ENCODE measurements at regions of chr5 and their contacts with region 1.

Region 1: DNA sequence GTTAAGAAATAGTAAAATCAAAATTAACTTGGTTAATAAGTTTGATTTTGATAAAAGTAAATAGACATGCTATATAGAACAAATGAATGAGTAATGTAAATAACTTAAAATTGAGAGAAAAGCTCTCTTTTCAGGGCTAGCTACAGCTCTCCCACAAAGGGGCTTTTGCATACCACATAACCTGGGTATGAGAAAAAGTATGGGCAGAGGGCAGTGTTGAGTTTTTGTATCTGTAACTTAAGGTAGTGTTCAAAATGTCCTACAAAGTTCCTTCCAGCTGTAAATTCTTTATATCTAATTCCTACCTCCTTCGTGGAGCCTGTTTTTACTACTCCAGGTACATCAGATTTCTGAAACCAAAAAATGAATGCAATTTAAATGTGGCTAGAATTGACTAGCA is 18.9 kb upstream of the TTC33 start:
- DNase-seq: no peak
- H3K4me3 ChIP-seq: no peak overlapping the region
- H3K27ac ChIP-seq: no peak overlapping the region
- H3K4me1 ChIP-seq: no peaks in the 10 kb centered on the region
- H3K27me3 ChIP-seq: no peaks in the 10 kb centered on the region
- CTCF ChIP-seq: no peak

Region 2: GRCh38 chr5:40021007-40021406 is 753.6 kb before region 1 on chr5:
- CTCF ChIA-PET with region 1: no interaction called
- POLR2A ChIA-PET with region 1: no interaction called
- intact Hi-C with region 1: no loop called
- DNase-seq: no peak
- H3K4me3 ChIP-seq: no peak overlapping the region
- H3K27ac ChIP-seq: no peak overlapping the region
- H3K4me1 ChIP-seq: no peaks in the 10 kb centered on the region
- H3K27me3 ChIP-seq: no peaks in the 10 kb centered on the region
- CTCF ChIP-seq: no peak

Region 3: GRCh38 chr5:40791715-40792139 is 17.1 kb after region 1 on chr5:
- CTCF ChIA-PET with region 1: no interaction called
- POLR2A ChIA-PET with region 1: no interaction called
- intact Hi-C with region 1: loop called (anchors 2 kb)
- DNase-seq: no peak
- H3K4me3 ChIP-seq: no peak overlapping the region
- H3K27ac ChIP-seq: no peak overlapping the region
- H3K4me1 ChIP-seq: peaks cover 18% of the 10 kb centered on the region
- H3K27me3 ChIP-seq: no peaks in the 10 kb centered on the region
- CTCF ChIP-seq: no peak

Measured in A673 (cell line).